ENCODE measurements at regions of chr12 and their contacts with region 1.

Region 1: GRCh38 chr12:104331376-104331775 is 27.8 kb downstream of the EID3 start:
- DNase-seq: no peak
- H3K4me3 Mint-ChIP-seq: no peak overlapping the region
- H3K27ac Mint-ChIP-seq: no peak overlapping the region
- H3K4me1 Mint-ChIP-seq: no peaks in the 10 kb centered on the region
- H3K27me3 Mint-ChIP-seq: no peaks in the 10 kb centered on the region
- CTCF ChIP-seq: no peak

Region 2: DNA sequence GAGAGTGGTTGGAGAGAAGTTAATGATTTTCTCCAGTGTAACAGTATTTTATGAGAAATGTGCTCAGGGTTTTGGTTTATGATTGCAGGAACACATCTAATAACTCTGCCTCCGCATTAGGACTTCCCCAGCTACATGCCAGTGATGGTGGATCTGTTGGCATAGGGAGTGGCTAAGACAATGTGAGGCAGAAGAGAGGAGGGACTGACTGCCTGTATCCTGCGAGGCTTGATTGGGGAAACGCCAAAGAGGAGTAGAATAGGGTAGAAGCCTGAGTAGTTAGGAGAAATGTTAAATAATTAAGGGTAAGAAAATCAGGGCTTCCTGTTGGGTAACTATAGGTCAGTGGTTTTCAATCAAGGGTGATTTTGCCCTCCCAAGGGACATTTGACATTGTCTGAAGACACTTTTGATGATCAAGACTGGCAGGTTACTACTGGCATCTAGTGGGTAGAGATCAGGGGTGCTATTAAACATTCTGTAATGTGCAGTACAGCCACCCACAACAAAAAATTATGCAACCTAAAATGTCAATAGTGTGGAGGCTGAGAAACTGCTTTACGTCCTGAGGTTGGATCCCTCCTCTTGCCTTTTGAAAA is 352.9 kb before region 1 on chr12:
- CTCF ChIA-PET with region 1: no interaction called
- intact Hi-C with region 1: no loop called
- DNase-seq: no peak
- H3K4me3 Mint-ChIP-seq: no peak overlapping the region
- H3K27ac Mint-ChIP-seq: no peak overlapping the region
- H3K4me1 Mint-ChIP-seq: no peaks in the 10 kb centered on the region
- H3K27me3 Mint-ChIP-seq: no peaks in the 10 kb centered on the region
- CTCF ChIP-seq: no peak

Region 3: DNA sequence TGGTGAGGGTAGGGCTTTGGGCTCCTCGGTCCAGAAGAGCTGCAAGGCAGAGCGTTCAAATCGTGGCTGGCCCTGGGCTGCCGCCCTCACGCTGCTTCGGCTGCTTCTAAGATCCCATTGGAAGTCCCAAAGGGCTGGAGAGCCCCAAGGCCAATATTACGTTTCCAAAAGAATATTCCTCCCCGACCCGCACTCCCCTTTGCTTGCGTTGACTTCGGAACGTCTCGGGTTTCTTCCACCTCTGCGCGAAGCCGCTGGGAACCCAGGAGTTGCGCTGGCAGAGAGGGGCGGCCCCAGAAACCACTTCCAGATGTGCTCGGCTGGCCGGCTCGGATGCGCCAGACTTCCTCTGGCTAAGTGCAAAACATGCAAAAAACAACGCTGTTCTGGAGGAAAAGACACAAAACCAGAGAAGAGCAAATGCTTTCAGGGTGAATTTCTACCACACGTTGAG is 281.4 kb before region 1 on chr12 and contains the start of gene GLT8D2:
- CTCF ChIA-PET with region 1: no interaction called
- intact Hi-C with region 1: no loop called
- DNase-seq: peak; percentile 22
- H3K4me3 Mint-ChIP-seq: peak within 1 kb of the TSS; percentile 65
- H3K27ac Mint-ChIP-seq: no peak within 1 kb of the TSS
- H3K4me1 Mint-ChIP-seq: peaks cover 20% of the 10 kb centered on the region
- H3K27me3 Mint-ChIP-seq: peaks cover 49% of the 10 kb centered on the region
- CTCF ChIP-seq: no peak
- total RNA-seq, gene GLT8D2: not detected in 2 replicates

Region 4: DNA sequence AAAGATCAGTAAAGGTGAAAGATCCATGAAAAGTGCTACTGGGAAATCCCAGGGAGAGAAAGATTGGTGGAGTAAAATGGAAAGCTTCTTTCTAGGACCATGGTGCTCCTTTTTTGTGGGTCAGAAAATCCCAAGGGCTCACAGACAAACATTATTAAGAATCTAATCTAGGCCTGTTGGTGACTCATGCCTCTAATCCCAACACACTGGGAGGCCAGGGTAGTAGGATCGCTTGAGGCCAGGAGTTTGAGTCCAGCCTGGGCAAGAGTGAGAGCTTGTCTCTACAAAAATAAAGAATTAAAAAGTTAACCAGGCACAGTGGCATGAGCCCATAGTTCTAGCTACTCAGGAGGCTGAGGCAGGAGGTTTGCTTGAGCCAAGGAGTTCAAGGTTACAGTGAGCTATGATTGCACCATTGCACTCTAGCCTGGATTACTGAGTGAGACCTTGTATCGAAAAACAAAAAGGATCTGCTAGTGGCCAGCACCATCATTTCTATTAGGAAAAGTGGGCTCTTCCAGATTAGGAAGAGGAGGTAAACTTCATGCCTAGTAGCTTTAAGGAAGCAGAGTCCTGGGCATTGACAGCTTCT is 72.8 kb before region 1 on chr12:
- CTCF ChIA-PET with region 1: no interaction called
- intact Hi-C with region 1: no loop called
- DNase-seq: no peak
- H3K4me3 Mint-ChIP-seq: no peak overlapping the region
- H3K27ac Mint-ChIP-seq: no peak overlapping the region
- H3K4me1 Mint-ChIP-seq: peaks cover 17% of the 10 kb centered on the region
- H3K27me3 Mint-ChIP-seq: no peaks in the 10 kb centered on the region
- CTCF ChIP-seq: no peak

Region 5: GRCh38 chr12:104371043-104371870 is 39.9 kb after region 1 on chr12:
- CTCF ChIA-PET with region 1: interaction called, 10 read pairs
- intact Hi-C with region 1: no loop called
- DNase-seq: peak; percentile 74
- H3K4me3 Mint-ChIP-seq: peak overlapping the region; percentile 6
- H3K27ac Mint-ChIP-seq: peak overlapping the region; percentile 58
- H3K4me1 Mint-ChIP-seq: peaks cover 15% of the 10 kb centered on the region
- H3K27me3 Mint-ChIP-seq: no peaks in the 10 kb centered on the region
- CTCF ChIP-seq: no peak

Region 6: GRCh38 chr12:104632724-104633201 is 301.4 kb after region 1 on chr12:
- CTCF ChIA-PET with region 1: no interaction called
- intact Hi-C with region 1: no loop called
- DNase-seq: no peak
- H3K4me3 Mint-ChIP-seq: no peak overlapping the region
- H3K27ac Mint-ChIP-seq: no peak overlapping the region
- H3K4me1 Mint-ChIP-seq: no peaks in the 10 kb centered on the region
- H3K27me3 Mint-ChIP-seq: peaks cover 58% of the 10 kb centered on the region
- CTCF ChIP-seq: no peak